CD8-positive, alpha-beta T cell (primary cell): ENCODE measurements at regions of chr18 and their contacts with region 1.

Region 1: DNA sequence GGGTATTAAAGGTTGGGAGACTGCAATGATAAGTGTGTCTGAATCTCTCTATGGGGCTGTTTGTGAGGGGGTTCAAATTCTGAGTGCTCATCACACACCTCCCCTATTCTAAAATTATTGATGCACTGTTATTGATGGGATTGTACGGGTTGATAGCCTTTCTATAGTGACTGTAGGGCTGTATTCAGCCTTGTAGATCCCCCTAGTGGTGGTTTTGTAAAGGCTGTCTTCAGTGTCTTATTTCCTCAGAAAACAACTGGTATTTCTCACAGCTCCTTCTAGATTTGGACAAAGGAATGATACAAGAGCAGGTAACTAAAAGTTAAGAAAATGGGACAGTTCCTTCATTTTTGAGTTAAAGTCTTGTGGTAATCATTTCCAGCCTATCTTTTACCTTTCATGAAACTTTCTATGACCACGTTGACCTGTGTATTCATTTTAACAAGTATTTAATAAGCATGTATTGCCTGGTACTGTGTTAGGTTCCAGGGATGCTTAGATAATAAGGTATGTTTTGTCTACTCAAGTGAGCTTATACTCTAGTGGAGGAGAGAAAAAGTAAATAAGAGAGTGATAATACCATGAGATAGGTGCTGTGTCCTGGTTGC is 21.2 kb downstream of the SMAD4 start:
- DNase-seq: peak in 3 of 9 experiments; percentile 25 to 76 (median 67)
- ATAC-seq: peak; percentile 92
- H3K4me3 ChIP-seq: no peak overlapping the region
- H3K4me3 Mint-ChIP-seq: no peak overlapping the region
- H3K27ac ChIP-seq: no peak overlapping the region
- H3K27ac Mint-ChIP-seq: peak overlapping the region; percentile 34
- H3K4me1 ChIP-seq: peaks cover 12% of the 10 kb centered on the region
- H3K4me1 Mint-ChIP-seq: peaks cover 43% of the 10 kb centered on the region
- H3K27me3 ChIP-seq: no peaks in the 10 kb centered on the region
- H3K27me3 Mint-ChIP-seq: no peaks in the 10 kb centered on the region
- CTCF ChIP-seq: peak; percentile 80

Region 2: DNA sequence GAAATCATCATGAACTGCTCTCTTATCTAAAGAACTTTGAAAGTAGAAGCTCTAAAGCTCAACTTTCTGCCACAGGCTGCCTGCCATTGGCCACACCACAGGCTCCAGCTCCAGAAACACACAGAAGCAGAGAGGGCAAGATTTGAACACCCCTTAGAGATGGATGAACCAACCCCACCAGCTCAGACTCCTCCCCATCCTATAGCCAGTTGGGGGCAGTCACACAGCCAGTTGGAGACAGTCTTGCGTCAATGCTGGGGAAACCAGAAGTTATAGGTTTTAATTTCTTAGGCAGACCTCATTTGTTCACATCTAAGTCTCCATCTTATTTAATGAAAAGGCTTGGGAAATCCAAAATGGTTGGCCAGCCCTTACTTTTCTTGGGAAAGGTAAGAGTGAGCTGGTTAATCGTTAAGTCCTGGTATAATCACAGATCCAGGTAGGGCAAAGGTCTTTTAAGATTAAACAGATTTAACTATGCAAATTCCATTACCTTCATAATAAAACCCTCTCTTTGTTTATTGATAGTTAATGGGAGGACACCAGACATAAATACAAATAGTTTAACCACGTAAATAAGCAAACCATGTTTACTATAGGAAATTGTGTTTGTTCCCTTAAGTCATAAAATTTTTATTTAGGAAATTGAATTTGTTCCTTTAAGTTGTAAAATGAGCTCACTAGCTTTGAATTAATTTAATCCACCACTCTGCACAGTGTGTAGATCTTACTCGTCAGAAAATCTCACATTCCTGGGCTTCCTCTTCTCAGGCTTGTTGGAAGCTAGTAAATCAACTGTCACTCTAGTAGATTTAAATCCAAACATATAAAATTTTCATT is 259.4 kb before region 1 on chr18:
- CTCF ChIA-PET with region 1: no interaction called
- POLR2A ChIA-PET with region 1: no interaction called
- intact Hi-C with region 1: no loop called
- DNase-seq: no peak
- ATAC-seq: no peak
- H3K4me3 ChIP-seq: no peak overlapping the region
- H3K4me3 Mint-ChIP-seq: no peak overlapping the region
- H3K27ac ChIP-seq: no peak overlapping the region
- H3K27ac Mint-ChIP-seq: no peak overlapping the region
- H3K4me1 ChIP-seq: no peaks in the 10 kb centered on the region
- H3K4me1 Mint-ChIP-seq: no peaks in the 10 kb centered on the region
- H3K27me3 ChIP-seq: peaks cover 0 to 5% of the 10 kb centered on the region in 2 experiments
- H3K27me3 Mint-ChIP-seq: peaks cover 28% of the 10 kb centered on the region
- CTCF ChIP-seq: no peak

Region 3: GRCh38 chr18:50947899-50948298 is 103.3 kb before region 1 on chr18:
- CTCF ChIA-PET with region 1: no interaction called
- POLR2A ChIA-PET with region 1: no interaction called
- intact Hi-C with region 1: no loop called
- DNase-seq: no peak
- ATAC-seq: no peak
- H3K4me3 ChIP-seq: no peak overlapping the region
- H3K4me3 Mint-ChIP-seq: no peak overlapping the region
- H3K27ac ChIP-seq: no peak overlapping the region
- H3K27ac Mint-ChIP-seq: peak overlapping the region; percentile 37
- H3K4me1 ChIP-seq: no peaks in the 10 kb centered on the region
- H3K4me1 Mint-ChIP-seq: no peaks in the 10 kb centered on the region
- H3K27me3 ChIP-seq: no peaks in the 10 kb centered on the region
- H3K27me3 Mint-ChIP-seq: no peaks in the 10 kb centered on the region
- CTCF ChIP-seq: no peak

Region 4: DNA sequence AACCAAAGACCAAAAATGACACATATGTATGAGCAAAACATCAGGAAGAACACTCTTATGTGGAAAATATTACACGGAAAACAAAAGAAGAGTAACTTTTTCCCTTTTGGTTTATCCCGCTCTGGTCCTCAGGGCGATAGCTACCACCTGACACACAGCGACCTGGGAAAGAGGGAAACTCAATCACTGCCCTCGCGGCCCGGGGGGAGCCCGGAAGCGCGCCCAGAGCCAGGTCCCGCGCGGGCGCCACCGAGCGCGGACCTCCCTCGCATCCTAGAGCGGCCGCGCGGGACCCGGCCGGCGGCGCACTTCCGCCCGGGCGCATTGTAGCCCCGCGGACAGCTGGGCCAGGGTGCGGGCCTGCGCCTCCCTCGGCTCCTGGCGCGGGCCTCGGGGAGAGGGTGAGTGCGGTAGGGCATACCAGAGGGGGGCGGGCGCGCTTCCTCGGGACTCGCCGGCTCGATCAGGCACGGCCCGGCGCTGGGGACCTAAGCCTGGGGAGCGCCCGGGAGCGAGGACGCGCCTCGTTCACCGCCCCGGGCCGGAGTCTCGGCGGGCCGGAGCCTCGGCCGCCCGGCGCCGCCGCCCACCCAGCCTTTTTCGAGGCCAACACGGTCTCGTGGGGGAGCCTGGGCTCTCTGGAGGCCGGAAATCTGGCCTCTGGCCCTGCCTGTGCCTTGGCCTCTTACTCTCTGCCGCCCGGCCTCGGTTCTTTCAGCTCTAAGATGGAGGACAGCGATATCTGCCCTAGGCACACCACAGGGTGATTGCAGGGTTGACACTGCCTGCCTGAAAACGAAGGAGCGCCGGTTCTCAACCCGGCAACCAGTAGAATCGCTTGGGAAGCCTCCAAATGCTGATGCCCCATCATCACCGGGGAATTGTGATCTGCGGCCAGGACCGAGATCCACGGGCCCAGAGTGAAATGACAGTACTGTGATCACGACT is 83.2 kb before region 1 on chr18 and contains the start of gene ELAC1:
- CTCF ChIA-PET with region 1: interaction called, 3 read pairs
- POLR2A ChIA-PET with region 1: interaction called, 6 read pairs
- intact Hi-C with region 1: loop called (anchors 5 kb)
- DNase-seq: peak; percentile 37 to 85 (median 64)
- ATAC-seq: peak; percentile 85
- H3K4me3 ChIP-seq: peak within 1 kb of the TSS; percentile 67 to 71
- H3K4me3 Mint-ChIP-seq: peak within 1 kb of the TSS; percentile 94
- H3K27ac ChIP-seq: peak within 1 kb of the TSS; percentile 86 to 89
- H3K27ac Mint-ChIP-seq: peak within 1 kb of the TSS; percentile 96
- H3K4me1 ChIP-seq: peaks cover 15% of the 10 kb centered on the region
- H3K4me1 Mint-ChIP-seq: peaks cover 28% of the 10 kb centered on the region
- H3K27me3 ChIP-seq: no peaks in the 10 kb centered on the region
- H3K27me3 Mint-ChIP-seq: no peaks in the 10 kb centered on the region
- CTCF ChIP-seq: no peak
- total RNA-seq, gene ELAC1: 3.5 to 4.0 TPM

Region 5: DNA sequence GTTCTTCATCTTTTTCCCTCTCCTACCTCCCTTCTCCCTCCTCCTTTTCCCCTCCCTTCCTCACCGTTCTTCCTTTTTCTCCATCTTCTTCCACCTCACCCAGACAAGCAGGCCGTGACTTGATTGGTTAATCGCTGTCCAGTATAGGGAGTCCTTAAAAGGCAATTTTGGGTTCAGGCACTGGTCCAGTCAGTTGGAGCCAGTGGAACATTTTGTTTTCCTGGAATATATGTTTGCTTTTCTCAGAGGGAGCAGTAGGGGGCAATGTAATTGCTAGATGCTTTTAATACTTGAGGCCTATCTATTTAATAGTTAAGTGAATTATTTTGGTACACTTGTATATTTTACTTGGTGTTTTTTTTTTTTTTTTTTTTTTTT is 68.4 kb before region 1 on chr18:
- CTCF ChIA-PET with region 1: interaction called, 4 read pairs
- POLR2A ChIA-PET with region 1: no interaction called
- intact Hi-C with region 1: loop called (anchors 5 kb)
- DNase-seq: no peak
- ATAC-seq: no peak
- H3K4me3 ChIP-seq: no peak overlapping the region
- H3K4me3 Mint-ChIP-seq: no peak overlapping the region
- H3K27ac ChIP-seq: no peak overlapping the region
- H3K27ac Mint-ChIP-seq: no peak overlapping the region
- H3K4me1 ChIP-seq: no peaks in the 10 kb centered on the region
- H3K4me1 Mint-ChIP-seq: peaks cover 19% of the 10 kb centered on the region
- H3K27me3 ChIP-seq: no peaks in the 10 kb centered on the region
- H3K27me3 Mint-ChIP-seq: no peaks in the 10 kb centered on the region
- CTCF ChIP-seq: no peak

Region 6: GRCh38 chr18:50994031-50994430 is 57.2 kb before region 1 on chr18:
- CTCF ChIA-PET with region 1: no interaction called
- POLR2A ChIA-PET with region 1: no interaction called
- intact Hi-C with region 1: no loop called
- DNase-seq: no peak
- ATAC-seq: no peak
- H3K4me3 ChIP-seq: no peak overlapping the region
- H3K4me3 Mint-ChIP-seq: no peak overlapping the region
- H3K27ac ChIP-seq: no peak overlapping the region
- H3K27ac Mint-ChIP-seq: no peak overlapping the region
- H3K4me1 ChIP-seq: no peaks in the 10 kb centered on the region
- H3K4me1 Mint-ChIP-seq: no peaks in the 10 kb centered on the region
- H3K27me3 ChIP-seq: no peaks in the 10 kb centered on the region
- H3K27me3 Mint-ChIP-seq: no peaks in the 10 kb centered on the region
- CTCF ChIP-seq: no peak

Region 7: GRCh38 chr18:51029694-51030536 is 21.3 kb before region 1 on chr18 and contains the start of gene SMAD4:
- CTCF ChIA-PET with region 1: interaction called, 17 read pairs
- POLR2A ChIA-PET with region 1: interaction called, 10 read pairs
- intact Hi-C with region 1: loop called (anchors 1 to 2 kb)
- DNase-seq: peak; percentile 94 to 99 (median 98)
- ATAC-seq: peak; percentile 83
- H3K4me3 ChIP-seq: peak within 1 kb of the TSS; percentile 74 to 80
- H3K4me3 Mint-ChIP-seq: peak within 1 kb of the TSS; percentile 97
- H3K27ac ChIP-seq: peak within 1 kb of the TSS; percentile 81 to 91
- H3K27ac Mint-ChIP-seq: peak within 1 kb of the TSS; percentile 99
- H3K4me1 ChIP-seq: peaks cover 41% of the 10 kb centered on the region
- H3K4me1 Mint-ChIP-seq: peaks cover 65% of the 10 kb centered on the region
- H3K27me3 ChIP-seq: no peaks in the 10 kb centered on the region
- H3K27me3 Mint-ChIP-seq: no peaks in the 10 kb centered on the region
- CTCF ChIP-seq: no peak
- total RNA-seq, gene SMAD4: 80.4 to 86.5 TPM

Region 8: DNA sequence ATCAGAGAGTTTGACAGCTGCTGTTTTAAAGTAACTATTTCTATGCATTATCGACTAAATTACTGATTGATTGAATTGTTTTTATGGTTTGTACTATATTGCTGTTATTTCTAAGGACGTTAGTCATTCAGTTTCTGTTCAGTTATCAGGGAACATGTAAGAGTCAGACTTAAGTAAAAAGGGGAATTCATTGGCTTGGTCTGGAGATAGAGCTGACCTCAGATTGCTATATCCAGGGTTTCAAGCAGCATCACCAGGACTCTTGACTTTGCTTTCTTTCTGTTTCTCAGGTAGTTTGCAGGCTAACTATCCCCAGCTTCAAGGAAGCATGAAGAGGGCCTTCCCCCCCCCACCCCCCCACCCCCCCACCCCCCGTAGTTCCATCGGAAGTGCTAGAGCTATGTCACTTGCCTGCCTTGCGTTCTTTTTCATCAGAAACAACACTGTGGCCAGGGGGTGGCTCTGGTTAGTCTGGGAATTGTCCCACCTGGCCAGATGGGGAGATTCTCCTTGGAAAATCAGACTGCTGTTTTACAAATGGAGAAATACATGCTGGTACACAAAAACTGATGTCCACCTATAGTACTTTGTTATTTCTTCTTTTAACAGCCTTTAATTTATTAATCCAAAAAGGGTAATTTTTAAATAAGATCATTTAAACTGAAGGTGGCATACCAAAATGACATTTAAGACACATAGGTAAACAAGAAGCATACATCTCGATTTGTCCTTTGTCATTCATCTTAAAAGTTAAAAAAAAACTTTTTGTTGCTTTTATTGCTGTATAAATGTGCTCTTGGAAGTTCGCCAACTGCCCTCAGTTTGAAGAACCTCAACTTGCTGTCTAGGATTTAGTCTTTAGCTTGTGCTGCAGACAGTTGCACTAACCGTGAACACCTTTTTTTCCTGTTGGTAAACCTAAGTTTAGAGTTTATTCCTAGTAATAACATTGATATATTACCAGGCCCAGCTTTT is 11.8 kb before region 1 on chr18:
- CTCF ChIA-PET with region 1: interaction called, 34 read pairs
- POLR2A ChIA-PET with region 1: interaction called, 3 read pairs
- intact Hi-C with region 1: no loop called
- DNase-seq: peak in 2 of 9 experiments; percentile 13 to 40
- ATAC-seq: peak; percentile 66
- H3K4me3 ChIP-seq: no peak overlapping the region
- H3K4me3 Mint-ChIP-seq: peak overlapping the region; percentile 13
- H3K27ac ChIP-seq: peak overlapping the region in 1 of 2 experiments; percentile 4
- H3K27ac Mint-ChIP-seq: peak overlapping the region; percentile 73
- H3K4me1 ChIP-seq: peaks cover 79% of the 10 kb centered on the region
- H3K4me1 Mint-ChIP-seq: peaks cover 91% of the 10 kb centered on the region
- H3K27me3 ChIP-seq: no peaks in the 10 kb centered on the region
- H3K27me3 Mint-ChIP-seq: no peaks in the 10 kb centered on the region
- CTCF ChIP-seq: no peak

Region 9: DNA sequence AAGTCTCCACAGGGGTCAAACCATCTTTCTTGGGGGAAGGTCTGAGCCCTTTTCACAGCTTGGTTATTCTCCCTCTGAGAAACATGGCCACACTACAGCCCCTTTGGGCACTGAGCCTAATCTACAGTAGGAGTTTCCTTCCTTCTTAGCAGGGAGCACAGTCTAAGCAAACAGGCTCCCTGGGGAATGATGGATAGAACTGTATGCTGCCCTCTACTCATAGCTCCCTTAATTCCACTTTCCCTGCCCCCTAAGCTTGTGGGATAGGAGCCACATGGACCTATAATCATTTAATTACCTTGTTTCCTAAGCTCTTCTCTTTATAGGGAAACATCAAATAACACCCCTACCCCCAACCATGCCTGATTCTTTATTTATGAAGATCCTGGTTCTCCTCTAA is 588.3 kb after region 1 on chr18:
- CTCF ChIA-PET with region 1: no interaction called
- POLR2A ChIA-PET with region 1: no interaction called
- intact Hi-C with region 1: no loop called
- DNase-seq: no peak
- ATAC-seq: no peak
- H3K4me3 ChIP-seq: no peak overlapping the region
- H3K4me3 Mint-ChIP-seq: no peak overlapping the region
- H3K27ac ChIP-seq: no peak overlapping the region
- H3K27ac Mint-ChIP-seq: no peak overlapping the region
- H3K4me1 ChIP-seq: no peaks in the 10 kb centered on the region
- H3K4me1 Mint-ChIP-seq: no peaks in the 10 kb centered on the region
- H3K27me3 ChIP-seq: no peaks in the 10 kb centered on the region
- H3K27me3 Mint-ChIP-seq: peaks cover 5% of the 10 kb centered on the region
- CTCF ChIP-seq: no peak